ENCODE measurements at regions of chr5 and their contacts with region 1.

Region 1: DNA sequence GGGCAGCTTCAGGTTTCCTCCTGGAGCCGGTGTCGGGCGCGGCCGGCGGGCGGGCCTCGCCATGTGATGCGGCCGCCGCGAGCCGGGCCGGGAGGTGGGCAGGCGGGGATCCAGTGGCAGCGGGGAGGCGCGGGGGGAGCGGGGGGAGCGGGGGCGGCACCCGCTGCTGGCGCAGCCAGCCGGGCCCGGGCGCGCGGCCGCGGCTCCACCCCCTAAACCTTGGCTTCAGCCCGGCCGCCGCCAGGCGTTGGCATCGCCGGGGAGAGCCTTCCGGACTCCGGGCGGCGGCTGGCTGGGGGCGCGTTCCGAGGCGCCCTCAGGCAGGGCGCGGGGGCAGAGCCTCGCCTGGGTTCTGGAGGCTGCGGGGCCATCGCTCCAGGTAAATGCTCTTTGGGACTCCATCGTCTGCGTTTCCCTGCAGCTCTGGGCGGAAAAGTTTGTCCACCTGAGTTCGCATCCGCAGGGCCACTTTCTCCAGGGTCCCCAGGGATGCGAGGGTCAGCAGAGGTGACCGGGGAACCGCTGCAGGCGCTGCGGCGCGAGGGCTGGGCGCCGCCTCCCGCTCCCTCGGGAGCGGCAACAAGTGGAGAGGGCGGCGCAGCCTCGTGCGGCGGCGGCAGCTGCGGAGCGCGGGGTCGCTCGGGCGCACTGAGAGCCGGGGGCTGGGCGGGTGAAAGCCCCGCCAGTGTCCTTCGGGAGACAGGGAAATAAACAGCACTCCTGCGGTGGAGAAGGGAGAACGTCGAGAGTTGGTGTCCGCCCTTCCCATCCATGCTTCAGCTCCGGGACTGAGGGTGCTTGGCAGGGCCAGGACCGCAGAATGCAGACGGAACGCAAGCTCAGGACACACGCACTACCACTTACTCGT is at the start of gene ARHGEF28:
- DNase-seq: no peak
- total RNA-seq, gene ARHGEF28: 12.7 to 13.0 TPM

Region 2: DNA sequence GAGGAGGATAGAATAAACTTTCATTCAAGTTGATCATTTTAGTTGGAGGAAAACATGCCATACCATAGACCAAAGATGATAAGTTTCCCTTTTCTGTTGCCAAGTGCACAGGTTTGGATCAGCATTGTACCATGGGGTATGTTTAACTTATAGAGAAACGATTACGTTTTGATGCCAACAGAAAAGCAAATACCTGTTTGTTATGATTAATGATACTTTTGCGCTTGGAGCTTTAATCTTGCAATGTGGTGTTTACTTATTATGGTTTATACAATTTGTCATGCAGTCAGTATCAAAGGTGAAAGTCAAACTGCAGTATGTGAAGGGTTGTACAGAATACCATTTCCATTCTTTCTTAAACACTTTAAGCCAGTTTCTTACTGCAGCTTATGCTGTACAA is 13.4 kb before region 1 on chr5:
- intact Hi-C with region 1: loop called in 1 of 2 experiments (anchors 1 kb)
- DNase-seq: no peak

Region 3: GRCh38 chr5:73673161-73673591 is 47.0 kb after region 1 on chr5:
- intact Hi-C with region 1: loop called in 1 of 2 experiments (anchors 10 kb)
- DNase-seq: no peak